HepG2 (cell line): ENCODE measurements at regions of chr9 and their contacts with region 1.

Region 1: GRCh38 chr9:12775679-12776512 is 1.1 kb downstream of the LURAP1L start:
- DNase-seq: peak; percentile 88
- ATAC-seq: peak; percentile 93
- H3K4me3 ChIP-seq: peak overlapping the region; percentile 74 to 90 (median 84)
- H3K27ac ChIP-seq: peak overlapping the region; percentile 97
- H3K4me1 ChIP-seq: peaks cover 24% of the 10 kb centered on the region
- H3K27me3 ChIP-seq: no peaks in the 10 kb centered on the region; a peak in 1 of 5 replicates
- CTCF ChIP-seq: peak; percentile 72
- EP300 ChIP-seq: peak; percentile 60 to 67; a peak in 2 of 4 replicates
- POLR2A ChIP-seq: peak; percentile 82 to 88
- RAD21 ChIP-seq: peak; percentile 48; the same call in 1 of the 2 replicates

Region 2: DNA sequence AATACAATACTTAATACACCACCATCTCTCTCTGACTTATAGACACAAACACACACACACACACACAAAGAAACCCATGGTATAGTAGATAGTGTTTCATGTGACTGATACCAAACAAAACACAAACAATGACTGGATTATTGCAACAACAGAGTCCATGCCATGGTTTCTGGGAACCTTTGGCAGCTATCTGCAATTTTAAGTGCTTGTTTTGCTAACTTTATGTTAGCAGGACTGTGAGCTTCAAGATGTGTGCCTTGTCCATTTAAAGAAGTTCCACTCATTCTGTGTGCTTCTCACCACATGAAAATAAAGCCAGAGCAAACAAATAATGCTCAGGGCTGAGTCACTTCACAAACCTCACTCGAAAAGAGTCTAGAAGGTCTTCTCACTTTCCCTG is 16.1 kb before region 1 on chr9:
- CTCF ChIA-PET with region 1: no interaction called
- POLR2A ChIA-PET with region 1: interaction called, 10 read pairs
- in situ Hi-C with region 1: no loop called
- intact Hi-C with region 1: no loop called
- DNase-seq: no peak
- ATAC-seq: no peak
- H3K4me3 ChIP-seq: no peak overlapping the region
- H3K27ac ChIP-seq: no peak overlapping the region
- H3K4me1 ChIP-seq: no peaks in the 10 kb centered on the region
- H3K27me3 ChIP-seq: no peaks in the 10 kb centered on the region
- CTCF ChIP-seq: no peak
- EP300 ChIP-seq: no peak
- POLR2A ChIP-seq: no peak
- RAD21 ChIP-seq: no peak

Region 3: DNA sequence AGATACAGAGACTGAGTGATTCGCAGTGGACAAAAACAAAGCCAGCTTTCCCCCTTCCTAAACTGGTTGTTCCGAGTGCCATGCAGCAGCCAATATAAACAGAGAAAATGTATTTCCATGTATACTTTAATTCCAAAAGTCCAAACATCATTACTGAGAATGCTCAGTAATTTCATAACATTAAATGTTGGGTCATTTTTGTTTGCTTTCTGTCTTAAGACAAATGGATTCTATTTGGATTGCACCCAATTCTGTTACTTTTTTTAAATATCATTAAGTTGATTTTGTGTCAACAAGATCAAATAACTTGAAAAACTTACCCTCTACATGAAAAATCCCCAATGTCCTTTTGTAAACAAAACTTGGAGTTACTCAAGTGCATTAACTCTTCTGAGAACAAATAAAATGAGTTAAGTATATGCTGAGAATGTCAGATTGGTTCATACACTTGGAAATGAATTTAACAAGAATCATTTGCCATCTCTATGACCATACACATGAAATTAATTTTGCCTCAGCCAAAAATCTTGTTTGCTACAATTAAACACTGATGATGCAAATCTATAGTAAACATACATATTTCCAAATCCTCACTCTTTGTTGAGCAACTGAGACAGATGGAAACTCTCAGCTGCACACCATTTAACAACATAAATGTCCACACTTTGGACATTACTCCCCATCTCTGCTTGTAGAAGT is 18.4 kb after region 1 on chr9:
- CTCF ChIA-PET with region 1: no interaction called
- POLR2A ChIA-PET with region 1: interaction called, 11 read pairs
- in situ Hi-C with region 1: no loop called
- intact Hi-C with region 1: no loop called
- DNase-seq: peak; percentile 35
- ATAC-seq: peak; percentile 73
- H3K4me3 ChIP-seq: no peak overlapping the region
- H3K27ac ChIP-seq: peak overlapping the region; percentile 19
- H3K4me1 ChIP-seq: peaks cover 27% of the 10 kb centered on the region
- H3K27me3 ChIP-seq: no peaks in the 10 kb centered on the region
- CTCF ChIP-seq: no peak
- EP300 ChIP-seq: peak in 1 of 2 experiments; percentile 26; a peak in 1 of 4 replicates
- POLR2A ChIP-seq: no peak
- RAD21 ChIP-seq: no peak

Region 4: GRCh38 chr9:12813960-12814876 is 38.3 kb after region 1 on chr9:
- CTCF ChIA-PET with region 1: interaction called, 7 read pairs
- POLR2A ChIA-PET with region 1: interaction called, 342 read pairs
- in situ Hi-C with region 1: loop called (anchors 5 kb)
- intact Hi-C with region 1: loop called (anchors 1 kb)
- DNase-seq: peak; percentile 92
- ATAC-seq: peak; percentile 86
- H3K4me3 ChIP-seq: peak overlapping the region; percentile 30 to 61 (median 56); a peak in 5 of 6 replicates
- H3K27ac ChIP-seq: peak overlapping the region; percentile 92
- H3K4me1 ChIP-seq: peaks cover 70% of the 10 kb centered on the region
- H3K27me3 ChIP-seq: no peaks in the 10 kb centered on the region
- CTCF ChIP-seq: no peak
- EP300 ChIP-seq: peak; percentile 61 to 71; a peak in 2 of 4 replicates
- POLR2A ChIP-seq: peak; percentile 38 to 44; a peak in 2 of 4 replicates
- RAD21 ChIP-seq: no peak; the same call in 1 of the 2 replicates

Region 5: DNA sequence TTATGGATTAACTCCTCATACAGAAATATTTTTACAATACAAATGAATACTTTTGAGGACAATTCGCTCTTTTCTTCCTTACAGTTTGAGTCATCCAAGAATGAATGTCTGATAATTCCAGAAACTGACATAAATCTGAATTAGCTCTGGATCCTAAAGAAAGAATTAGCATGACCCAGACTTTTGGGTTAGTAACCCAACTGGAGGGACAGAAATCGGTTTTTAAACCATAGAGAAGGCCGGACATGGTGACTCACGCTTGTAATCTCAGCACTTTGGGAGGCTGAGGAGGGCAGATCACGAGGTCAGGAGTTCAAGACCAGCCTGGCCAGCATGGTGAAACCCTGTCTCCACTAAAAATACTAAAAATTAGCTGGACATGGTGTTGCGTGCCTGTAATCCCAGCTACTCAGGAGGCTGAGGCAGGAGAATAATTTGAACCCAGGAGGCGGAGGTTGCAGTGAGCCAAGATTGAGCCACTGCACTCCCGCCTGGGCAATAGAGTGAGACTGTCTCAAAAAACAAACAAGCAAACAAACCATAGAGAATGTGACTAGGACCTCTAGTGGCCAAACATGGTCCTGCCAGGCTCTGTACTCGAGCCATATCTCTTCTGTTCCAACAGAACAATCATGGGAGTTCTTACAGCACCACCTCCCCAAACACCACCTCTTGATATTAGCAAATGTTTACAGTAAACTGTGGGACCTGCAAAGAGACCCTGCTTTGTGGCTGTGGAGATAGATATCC is 43.7 kb after region 1 on chr9:
- CTCF ChIA-PET with region 1: interaction called, 7 read pairs
- POLR2A ChIA-PET with region 1: interaction called, 342 read pairs
- in situ Hi-C with region 1: loop called (anchors 5 kb)
- intact Hi-C with region 1: loop called (anchors 1 kb)
- DNase-seq: peak; percentile 53
- ATAC-seq: peak; percentile 66
- H3K4me3 ChIP-seq: no peak overlapping the region
- H3K27ac ChIP-seq: no peak overlapping the region
- H3K4me1 ChIP-seq: peaks cover 52% of the 10 kb centered on the region
- H3K27me3 ChIP-seq: no peaks in the 10 kb centered on the region
- CTCF ChIP-seq: peak; percentile 76
- EP300 ChIP-seq: no peak
- POLR2A ChIP-seq: no peak
- RAD21 ChIP-seq: peak; percentile 73

Region 6: DNA sequence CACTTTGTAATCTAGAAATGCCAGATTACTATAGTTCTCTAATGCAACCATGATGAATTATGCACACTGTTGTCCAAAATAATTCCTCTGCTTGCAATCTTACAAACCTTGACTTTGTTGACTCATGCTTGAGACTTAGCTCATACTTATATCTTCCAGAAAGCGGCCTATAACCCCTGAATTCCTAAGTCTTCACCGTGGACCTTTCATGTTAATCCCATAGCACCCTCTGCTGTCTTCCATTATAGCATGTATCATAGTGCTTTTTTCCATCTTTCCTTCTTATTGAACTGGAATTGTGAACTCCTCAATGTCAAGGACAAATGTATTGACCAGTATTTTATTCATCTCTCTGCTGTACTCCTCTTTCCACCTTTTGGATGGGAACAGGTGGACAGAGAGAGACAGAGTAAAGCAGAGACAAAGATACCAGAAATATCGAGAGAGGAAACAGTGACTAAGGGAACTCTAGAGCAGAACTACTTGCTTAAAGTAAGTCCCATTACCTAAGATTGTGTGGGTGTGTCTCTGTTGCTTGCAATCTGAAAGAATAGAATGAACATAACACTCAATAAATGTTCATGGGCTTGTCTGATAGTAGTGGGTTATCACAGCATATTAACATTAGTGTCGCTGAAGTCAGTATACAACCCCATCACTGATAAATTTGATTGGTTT is 109.0 kb after region 1 on chr9:
- CTCF ChIA-PET with region 1: interaction called, 3 read pairs
- POLR2A ChIA-PET with region 1: no interaction called
- in situ Hi-C with region 1: no loop called
- intact Hi-C with region 1: loop called (anchors 2 kb)
- DNase-seq: peak; percentile 36
- ATAC-seq: peak; percentile 77
- H3K4me3 ChIP-seq: no peak overlapping the region
- H3K27ac ChIP-seq: no peak overlapping the region
- H3K4me1 ChIP-seq: no peaks in the 10 kb centered on the region
- H3K27me3 ChIP-seq: no peaks in the 10 kb centered on the region
- CTCF ChIP-seq: peak; percentile 73
- EP300 ChIP-seq: no peak
- POLR2A ChIP-seq: no peak
- RAD21 ChIP-seq: peak; percentile 67

Region 7: DNA sequence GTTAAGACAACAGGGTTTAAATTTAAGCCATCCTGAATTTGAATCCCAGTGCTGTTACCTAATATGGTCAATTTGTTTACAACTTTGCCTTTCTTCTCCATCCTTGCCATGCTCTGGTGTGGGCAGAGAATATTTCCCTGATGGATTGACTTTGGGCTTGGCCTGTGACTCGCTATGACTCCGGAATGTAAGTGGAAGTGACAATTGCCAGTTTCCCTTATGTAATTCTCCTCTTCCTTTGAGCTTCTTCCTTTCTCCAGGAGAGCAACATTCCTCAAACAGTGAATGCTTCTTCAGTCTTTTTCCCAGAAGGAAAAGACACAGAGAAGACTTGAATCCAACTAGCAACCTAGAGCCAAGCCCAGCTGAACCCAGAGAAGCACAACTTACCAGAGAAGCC is 158.1 kb after region 1 on chr9:
- CTCF ChIA-PET with region 1: no interaction called
- POLR2A ChIA-PET with region 1: no interaction called
- in situ Hi-C with region 1: no loop called
- intact Hi-C with region 1: no loop called
- DNase-seq: no peak
- ATAC-seq: no peak
- H3K4me3 ChIP-seq: no peak overlapping the region
- H3K27ac ChIP-seq: no peak overlapping the region
- H3K4me1 ChIP-seq: no peaks in the 10 kb centered on the region
- H3K27me3 ChIP-seq: no peaks in the 10 kb centered on the region
- CTCF ChIP-seq: no peak
- EP300 ChIP-seq: no peak
- POLR2A ChIP-seq: no peak
- RAD21 ChIP-seq: no peak